PC-3 (cell line): ENCODE measurements at regions of chr16 and their contacts with region 1.

Region 1: DNA sequence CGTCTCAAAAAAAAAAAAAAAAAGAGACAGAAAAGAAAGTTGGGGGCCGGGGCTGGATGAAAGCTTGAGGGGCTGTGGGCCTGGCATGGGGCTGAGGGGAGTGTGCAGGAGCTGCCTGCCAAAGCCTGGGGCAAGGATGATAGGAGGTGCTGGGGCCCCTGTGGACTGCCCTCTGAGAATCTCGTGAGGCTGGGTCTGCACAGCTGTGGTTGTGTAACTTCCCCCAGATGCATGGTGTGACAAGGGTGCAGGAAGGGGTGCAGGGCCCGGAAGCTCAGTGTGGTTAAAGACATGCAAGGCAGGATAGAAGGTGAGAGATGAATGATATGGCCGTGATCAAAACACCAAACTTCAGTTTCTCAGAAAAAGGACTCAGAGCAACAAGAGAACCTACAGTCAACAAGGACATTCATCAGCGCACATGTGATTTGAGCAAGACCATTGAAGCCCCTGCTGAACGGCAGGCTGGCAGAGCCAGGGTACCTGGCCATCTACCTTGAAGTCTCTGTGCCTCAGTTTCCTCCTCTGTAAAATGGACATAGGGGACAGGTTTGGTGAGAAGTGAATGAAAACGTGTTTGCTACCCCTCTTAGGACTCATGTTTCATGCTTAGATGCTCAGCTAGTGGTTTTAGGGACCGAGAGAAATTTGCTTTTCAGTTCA is 9.6 kb downstream of the IL32 start:
- DNase-seq: no peak
- ATAC-seq: no peak
- H3K4me3 ChIP-seq: no peak overlapping the region
- H3K27ac ChIP-seq: no peak overlapping the region
- H3K4me1 ChIP-seq: no peaks in the 10 kb centered on the region
- H3K27me3 ChIP-seq: no peaks in the 10 kb centered on the region
- CTCF ChIP-seq: no peak

Region 2: GRCh38 chr16:3047387-3047720 is 27.6 kb before region 1 on chr16:
- CTCF ChIA-PET with region 1: no interaction called
- POLR2A ChIA-PET with region 1: interaction called, 17 read pairs
- intact Hi-C with region 1: no loop called
- DNase-seq: no peak
- ATAC-seq: no peak
- H3K4me3 ChIP-seq: no peak overlapping the region
- H3K27ac ChIP-seq: no peak overlapping the region
- H3K4me1 ChIP-seq: no peaks in the 10 kb centered on the region
- H3K27me3 ChIP-seq: peaks cover 3% of the 10 kb centered on the region; the same call in 1 of the 2 replicates
- CTCF ChIP-seq: no peak